AG04450 (cell line): ENCODE measurements at regions of chr6 and their contacts with region 1.

Region 1: GRCh38 chr6:32413427-32414047 is 6.6 kb upstream of the BTNL2 start:
- DNase-seq: peak; percentile 57
- H3K4me3 ChIP-seq: no peak overlapping the region
- H3K27ac ChIP-seq: no peak overlapping the region
- H3K27me3 ChIP-seq: peaks cover 6% of the 10 kb centered on the region
- CTCF ChIP-seq: peak; percentile 95

Region 2: GRCh38 chr6:32244946-32245398 is 168.6 kb before region 1 on chr6:
- CTCF ChIA-PET with region 1: interaction called, 24 read pairs
- POLR2A ChIA-PET with region 1: no interaction called
- DNase-seq: peak; percentile 39
- H3K4me3 ChIP-seq: no peak overlapping the region
- H3K27ac ChIP-seq: no peak overlapping the region
- H3K27me3 ChIP-seq: peaks cover 24% of the 10 kb centered on the region
- CTCF ChIP-seq: peak; percentile 82

Region 3: DNA sequence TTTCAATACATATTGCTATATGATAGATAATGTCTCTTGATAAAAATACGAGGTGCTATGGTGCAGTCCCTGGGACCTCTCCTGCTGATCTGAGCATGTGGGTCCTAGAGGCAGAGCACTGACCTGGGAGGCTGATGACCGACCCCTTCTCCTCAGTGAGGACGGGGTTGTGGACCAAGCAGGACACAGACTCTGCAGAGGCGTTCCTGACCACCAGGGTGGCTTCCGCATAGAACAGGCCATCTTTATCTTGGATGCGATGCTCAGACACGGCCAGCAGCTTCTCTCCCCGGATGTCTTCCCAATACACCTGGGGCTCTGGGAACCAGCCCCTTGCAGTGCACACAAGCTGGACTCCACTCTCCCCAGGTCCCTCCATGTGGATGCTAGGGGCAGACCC is 10.7 kb before region 1 on chr6:
- CTCF ChIA-PET with region 1: interaction called, 71 read pairs
- POLR2A ChIA-PET with region 1: no interaction called
- DNase-seq: no peak
- H3K4me3 ChIP-seq: no peak overlapping the region
- H3K27ac ChIP-seq: no peak overlapping the region
- H3K27me3 ChIP-seq: peaks cover 9% of the 10 kb centered on the region
- CTCF ChIP-seq: no peak

Region 4: GRCh38 chr6:32424589-32425300 is 11.2 kb after region 1 on chr6:
- CTCF ChIA-PET with region 1: interaction called, 31 read pairs
- POLR2A ChIA-PET with region 1: no interaction called
- DNase-seq: no peak
- H3K4me3 ChIP-seq: no peak overlapping the region
- H3K27ac ChIP-seq: no peak overlapping the region
- H3K27me3 ChIP-seq: peaks cover 1% of the 10 kb centered on the region
- CTCF ChIP-seq: no peak

Region 5: GRCh38 chr6:32700391-32701040 is 287.0 kb after region 1 on chr6:
- CTCF ChIA-PET with region 1: interaction called, 33 read pairs
- POLR2A ChIA-PET with region 1: no interaction called
- DNase-seq: peak; percentile 6
- H3K4me3 ChIP-seq: no peak overlapping the region
- H3K27ac ChIP-seq: no peak overlapping the region
- H3K27me3 ChIP-seq: no peaks in the 10 kb centered on the region
- CTCF ChIP-seq: peak; percentile 70

Region 6: GRCh38 chr6:32785781-32786533 is 372.4 kb after region 1 on chr6:
- CTCF ChIA-PET with region 1: interaction called, 96 read pairs
- POLR2A ChIA-PET with region 1: no interaction called
- DNase-seq: no peak
- H3K4me3 ChIP-seq: no peak overlapping the region
- H3K27ac ChIP-seq: no peak overlapping the region
- H3K27me3 ChIP-seq: peaks cover 9% of the 10 kb centered on the region
- CTCF ChIP-seq: peak; percentile 66

Region 7: DNA sequence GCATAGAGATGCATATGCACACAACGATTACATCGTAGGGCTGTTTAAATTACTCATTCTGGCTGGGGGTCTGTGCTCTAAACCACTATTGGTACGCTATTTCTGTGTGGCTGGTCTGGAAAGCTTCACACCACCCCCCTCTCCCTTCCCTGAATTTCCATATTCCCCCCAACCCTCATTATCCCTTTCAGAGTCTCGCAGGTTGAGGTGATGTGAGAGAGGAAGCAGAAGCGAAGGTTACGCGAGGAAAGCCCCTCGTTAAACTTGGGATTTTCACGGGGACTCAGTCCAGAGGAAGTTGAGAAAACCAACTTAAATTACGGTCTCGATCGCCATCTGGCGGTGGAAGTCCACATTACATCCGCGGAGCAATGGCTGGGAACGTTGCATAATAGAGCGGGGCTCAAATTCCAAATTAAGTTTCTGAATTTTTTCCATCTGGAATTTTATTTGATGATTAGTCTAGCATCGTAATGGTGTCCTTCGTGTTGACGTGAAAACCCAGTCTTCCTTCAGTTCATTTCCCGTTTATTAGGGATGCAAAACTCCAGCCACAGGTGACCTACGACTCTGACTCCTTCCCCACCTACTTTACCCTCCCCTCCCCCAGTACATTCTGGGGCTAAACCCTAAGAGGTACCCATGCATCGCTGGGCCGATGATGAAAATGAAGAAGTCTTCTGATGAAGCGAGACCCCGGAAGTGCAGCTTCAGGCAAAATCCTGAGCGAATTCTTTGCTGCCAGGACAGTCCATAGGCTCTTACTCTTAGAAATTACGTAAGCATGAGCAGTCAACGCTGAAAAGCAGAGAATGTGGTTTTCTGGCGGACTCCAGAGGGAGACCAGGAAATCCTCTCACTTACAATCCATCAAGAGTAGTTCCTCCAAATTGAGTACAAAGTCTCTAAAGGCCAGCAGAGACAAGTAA is 383.6 kb after region 1 on chr6:
- CTCF ChIA-PET with region 1: interaction called, 24 read pairs
- POLR2A ChIA-PET with region 1: no interaction called
- DNase-seq: no peak
- H3K4me3 ChIP-seq: peak overlapping the region; percentile 47
- H3K27ac ChIP-seq: no peak overlapping the region
- H3K27me3 ChIP-seq: peaks cover 13% of the 10 kb centered on the region
- CTCF ChIP-seq: peak; percentile 77